Activated CD4-positive, alpha-beta T cell treated with anti-CD3 and anti-CD28 coated beads for 36 hours (primary cell): ENCODE measurements at regions of chr4 and their contacts with region 1.

Region 1: DNA sequence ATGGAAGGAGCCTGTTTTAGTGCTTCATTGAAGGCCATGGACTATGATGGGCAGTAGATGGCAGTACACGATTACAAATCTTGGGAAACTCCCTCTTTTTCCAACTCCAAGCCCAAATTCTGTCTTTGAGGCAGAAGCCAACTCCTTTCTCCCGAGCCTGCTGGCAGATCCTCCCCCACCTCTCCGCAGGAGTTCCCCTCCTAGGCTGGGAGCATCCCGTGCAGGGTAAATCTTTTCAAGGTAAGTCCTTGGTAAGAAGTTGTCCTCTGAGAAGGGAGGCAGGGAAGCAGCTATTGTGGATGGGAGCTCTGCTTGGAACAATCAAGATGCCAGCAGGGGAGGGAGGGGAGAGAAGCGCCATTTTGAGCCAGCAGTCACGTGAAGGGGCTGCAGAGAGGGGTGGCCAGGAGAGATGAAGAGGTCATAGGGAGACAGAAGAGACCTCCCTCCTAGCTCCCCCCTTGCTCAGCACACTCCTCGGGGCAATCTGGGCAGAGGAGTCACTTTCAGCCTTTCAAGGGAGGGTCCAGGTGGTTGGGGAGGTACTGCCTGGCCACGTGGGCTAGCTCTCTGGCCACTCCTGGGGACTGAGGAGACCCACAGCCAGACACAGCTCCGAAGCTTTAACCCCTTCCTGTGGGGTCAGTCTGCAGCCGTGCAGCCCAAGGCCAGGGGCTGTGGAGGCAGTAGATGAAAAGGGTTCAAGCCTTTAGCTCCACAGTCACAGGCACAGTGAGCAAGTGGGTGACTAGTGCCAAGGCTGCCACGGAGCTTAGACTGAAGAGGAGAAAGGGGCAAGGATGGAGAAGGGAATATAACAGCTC is 9.6 kb downstream of the CC2D2A start:
- DNase-seq: peak; percentile 15
- ATAC-seq: peak; percentile 39
- H3K4me3 Mint-ChIP-seq: no peak overlapping the region
- H3K27ac Mint-ChIP-seq: no peak overlapping the region
- H3K4me1 Mint-ChIP-seq: no peaks in the 10 kb centered on the region
- H3K27me3 Mint-ChIP-seq: no peaks in the 10 kb centered on the region

Region 2: DNA sequence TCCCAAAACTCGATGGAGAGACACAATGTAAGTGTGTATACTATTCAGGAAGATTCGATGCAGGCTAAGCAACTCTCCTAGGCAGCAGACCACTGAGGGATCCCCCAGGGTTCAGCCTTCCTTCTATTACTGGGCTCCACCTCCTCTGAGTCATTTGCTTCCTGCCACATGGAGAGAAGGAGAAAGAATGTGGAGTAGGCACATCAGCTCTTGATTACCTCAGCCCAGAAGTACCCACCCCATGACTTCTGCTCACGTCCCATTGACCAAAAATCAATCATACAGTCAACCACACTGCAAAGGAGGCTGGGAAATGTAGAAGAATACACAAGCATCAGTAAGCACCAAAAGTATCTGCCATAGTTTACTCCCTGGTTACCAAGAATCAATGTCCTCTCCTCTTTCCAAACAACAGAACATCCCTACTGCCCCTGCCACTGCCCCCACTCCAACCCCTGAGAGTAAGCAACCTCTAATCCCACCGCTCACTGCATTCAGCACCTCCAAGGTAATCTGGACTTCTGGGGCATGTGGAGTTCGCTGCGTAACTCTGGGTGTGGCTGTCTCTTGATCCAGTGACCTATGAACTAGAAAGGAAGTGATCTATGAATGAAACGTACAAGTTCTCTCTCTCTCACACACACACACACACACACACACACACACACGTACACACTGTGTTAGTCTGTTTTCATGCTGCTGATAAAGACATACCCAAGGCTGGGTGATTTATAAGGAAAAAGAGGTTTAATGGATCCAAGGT is 142.7 kb before region 1 on chr4:
- CTCF ChIA-PET with region 1: no interaction called
- POLR2A ChIA-PET with region 1: no interaction called
- intact Hi-C with region 1: no loop called
- DNase-seq: no peak
- ATAC-seq: no peak
- H3K4me3 Mint-ChIP-seq: no peak overlapping the region
- H3K27ac Mint-ChIP-seq: no peak overlapping the region
- H3K4me1 Mint-ChIP-seq: no peaks in the 10 kb centered on the region
- H3K27me3 Mint-ChIP-seq: peaks cover 5% of the 10 kb centered on the region

Region 3: GRCh38 chr4:15368856-15369255 is 110.4 kb before region 1 on chr4:
- CTCF ChIA-PET with region 1: no interaction called
- POLR2A ChIA-PET with region 1: no interaction called
- intact Hi-C with region 1: no loop called
- DNase-seq: no peak
- ATAC-seq: peak; percentile 60
- H3K4me3 Mint-ChIP-seq: no peak overlapping the region
- H3K27ac Mint-ChIP-seq: no peak overlapping the region
- H3K4me1 Mint-ChIP-seq: peaks cover 23% of the 10 kb centered on the region
- H3K27me3 Mint-ChIP-seq: peaks cover 5% of the 10 kb centered on the region

Region 4: GRCh38 chr4:15729910-15730533 is 250.7 kb after region 1 on chr4:
- CTCF ChIA-PET with region 1: no interaction called
- POLR2A ChIA-PET with region 1: no interaction called
- intact Hi-C with region 1: loop called in 1 of 2 experiments (anchors 5 kb)
- DNase-seq: peak; percentile 19
- ATAC-seq: peak; percentile 65
- H3K4me3 Mint-ChIP-seq: no peak overlapping the region
- H3K27ac Mint-ChIP-seq: no peak overlapping the region
- H3K4me1 Mint-ChIP-seq: peaks cover 7% of the 10 kb centered on the region
- H3K27me3 Mint-ChIP-seq: no peaks in the 10 kb centered on the region